ENCODE measurements at regions of chr3 and their contacts with region 1.

Region 1: GRCh38 chr3:156674046-156674910 is at the start of gene TIPARP:
- DNase-seq: peak; percentile 99 to 100 (median 99)
- H3K4me3 ChIP-seq: peak within 1 kb of the TSS; percentile 77
- H3K27ac ChIP-seq: peak within 1 kb of the TSS; percentile 88 to 90
- H3K4me1 ChIP-seq: peaks cover 4% of the 10 kb centered on the region
- H3K27me3 ChIP-seq: no peaks in the 10 kb centered on the region
- CTCF ChIP-seq: peak; percentile 61 to 86 (median 78)
- EP300 ChIP-seq: no peak
- POLR2A ChIP-seq: peak; percentile 97
- total RNA-seq, gene TIPARP: 26.3 to 109 (median 48.7) TPM

Region 2: GRCh38 chr3:154862265-154862664 is 1812.0 kb before region 1 on chr3:
- intact Hi-C with region 1: no loop called
- DNase-seq: no peak
- H3K4me3 ChIP-seq: no peak overlapping the region
- H3K27ac ChIP-seq: no peak overlapping the region
- H3K4me1 ChIP-seq: no peaks in the 10 kb centered on the region
- H3K27me3 ChIP-seq: no peaks in the 10 kb centered on the region
- CTCF ChIP-seq: no peak
- EP300 ChIP-seq: no peak
- POLR2A ChIP-seq: no peak

Region 3: GRCh38 chr3:156547637-156548036 is 126.6 kb before region 1 on chr3:
- intact Hi-C with region 1: loop called in 3 of 4 experiments (anchors 5 kb)
- DNase-seq: no peak
- H3K4me3 ChIP-seq: no peak overlapping the region
- H3K27ac ChIP-seq: no peak overlapping the region
- H3K4me1 ChIP-seq: peaks cover 9% of the 10 kb centered on the region
- H3K27me3 ChIP-seq: no peaks in the 10 kb centered on the region
- CTCF ChIP-seq: no peak
- EP300 ChIP-seq: no peak
- POLR2A ChIP-seq: no peak

Region 4: DNA sequence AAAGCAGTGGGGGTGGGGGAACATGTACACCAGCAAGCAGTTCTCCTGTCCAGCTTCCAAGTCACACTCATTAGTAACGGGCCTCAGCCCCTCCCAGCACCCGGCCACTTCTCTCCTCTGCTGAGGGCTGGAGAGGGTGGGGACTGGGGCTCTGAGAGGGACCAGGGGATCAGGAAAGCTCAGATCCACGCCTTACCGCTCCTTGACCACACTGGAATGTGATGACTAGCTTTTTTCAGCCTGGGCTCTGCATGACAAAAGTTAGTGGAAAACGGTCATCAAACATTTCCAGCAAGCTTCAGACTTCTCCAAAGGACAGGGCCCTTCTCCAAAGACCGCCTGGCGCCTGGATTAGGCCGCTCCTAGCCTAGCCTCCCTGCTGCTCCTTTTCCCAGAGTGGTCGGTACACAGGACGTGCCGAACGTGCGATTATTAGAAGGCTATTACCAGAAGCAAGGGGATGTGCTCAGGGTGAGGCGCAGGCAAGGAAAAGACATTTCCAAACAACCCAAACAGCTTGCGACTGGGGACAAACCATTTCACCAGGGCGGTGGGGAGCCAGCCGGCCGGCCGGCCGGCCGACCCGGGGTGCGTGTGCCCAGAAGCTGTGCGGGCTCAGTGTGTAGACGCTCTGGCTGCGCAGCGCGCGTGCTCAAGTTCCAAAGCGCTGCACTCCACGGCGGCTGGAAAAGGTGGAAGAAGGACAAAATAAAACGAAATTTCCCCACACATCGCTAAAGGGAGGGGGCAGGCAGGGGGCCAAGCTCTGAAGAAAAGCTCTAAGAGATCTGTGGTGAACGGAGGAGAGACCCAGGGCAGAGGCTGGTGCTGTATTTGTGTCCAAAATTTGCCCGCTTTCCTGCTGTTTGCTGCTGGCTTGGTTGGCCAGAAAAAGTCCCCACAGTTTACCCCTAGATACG is 68.3 kb before region 1 on chr3:
- intact Hi-C with region 1: loop called in 2 of 4 experiments (anchors 2 kb)
- DNase-seq: peak; percentile 29 to 76 (median 50)
- H3K4me3 ChIP-seq: peak overlapping the region; percentile 20
- H3K27ac ChIP-seq: peak overlapping the region; percentile 1 to 6
- H3K4me1 ChIP-seq: no peaks in the 10 kb centered on the region
- H3K27me3 ChIP-seq: no peaks in the 10 kb centered on the region
- CTCF ChIP-seq: no peak
- EP300 ChIP-seq: no peak
- POLR2A ChIP-seq: no peak

Region 5: GRCh38 chr3:156826144-156826895 is 152.0 kb after region 1 on chr3 and contains the start of gene LEKR1:
- intact Hi-C with region 1: loop called in 1 of 4 experiments (anchors 10 kb)
- DNase-seq: peak; percentile 84 to 93 (median 88)
- H3K4me3 ChIP-seq: peak within 1 kb of the TSS; percentile 67
- H3K27ac ChIP-seq: peak within 1 kb of the TSS; percentile 75 to 83
- H3K4me1 ChIP-seq: no peaks in the 10 kb centered on the region
- H3K27me3 ChIP-seq: no peaks in the 10 kb centered on the region
- CTCF ChIP-seq: peak in 2 of 3 donors; percentile 8 to 16
- EP300 ChIP-seq: peak; percentile 3
- POLR2A ChIP-seq: peak; percentile 76
- total RNA-seq, gene LEKR1: 1.5 to 7.8 (median 2.6) TPM

Region 6: DNA sequence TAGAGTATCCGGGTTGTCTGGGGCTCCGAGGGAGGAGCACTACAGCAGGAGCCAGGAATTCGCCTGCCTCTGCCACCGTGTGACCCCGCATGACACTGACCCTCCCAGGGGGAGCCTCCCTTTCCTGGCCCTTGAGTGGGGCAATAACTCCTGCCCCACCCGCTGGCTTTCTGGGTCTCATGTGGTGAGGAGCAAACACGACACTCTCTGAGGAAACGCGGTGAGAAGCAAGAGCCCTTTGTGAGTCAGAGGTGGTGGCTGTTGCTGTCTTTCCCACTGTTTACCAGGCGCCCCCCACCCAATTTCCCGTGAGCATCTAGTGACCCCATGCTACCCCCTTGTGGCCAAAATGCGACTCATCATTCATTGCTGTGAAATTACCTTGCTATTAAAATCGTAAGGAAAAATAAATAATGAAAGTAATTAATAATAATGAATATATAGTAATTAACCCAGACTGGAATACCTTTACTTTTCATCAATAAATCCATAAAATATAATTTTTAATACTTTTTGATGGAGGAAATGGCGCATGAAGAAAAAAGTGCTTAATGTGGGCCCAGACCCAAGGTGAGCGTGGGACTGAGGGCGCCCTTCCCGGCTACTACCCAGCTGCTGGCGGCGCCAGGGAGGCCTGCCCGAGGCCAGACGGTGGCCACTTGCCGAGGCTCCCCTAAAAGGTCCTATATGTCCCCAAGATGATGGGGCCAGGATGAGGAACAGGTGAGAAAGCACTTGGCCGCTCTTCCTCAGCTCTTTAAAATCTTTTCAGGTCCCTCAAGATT is 456.4 kb after region 1 on chr3:
- intact Hi-C with region 1: loop called in 3 of 4 experiments (anchors 5 kb)
- DNase-seq: peak; percentile 35 to 60 (median 54)
- H3K4me3 ChIP-seq: no peak overlapping the region
- H3K27ac ChIP-seq: peak overlapping the region; percentile 26 to 38
- H3K4me1 ChIP-seq: peaks cover 10% of the 10 kb centered on the region
- H3K27me3 ChIP-seq: no peaks in the 10 kb centered on the region
- CTCF ChIP-seq: peak in 2 of 3 donors; percentile 30 to 58
- EP300 ChIP-seq: no peak
- POLR2A ChIP-seq: no peak

Region 7: GRCh38 chr3:157148196-157148889 is 474.1 kb after region 1 on chr3:
- intact Hi-C with region 1: loop called in 1 of 4 experiments (anchors 10 kb)
- DNase-seq: no peak
- H3K4me3 ChIP-seq: no peak overlapping the region
- H3K27ac ChIP-seq: no peak overlapping the region
- H3K4me1 ChIP-seq: no peaks in the 10 kb centered on the region
- H3K27me3 ChIP-seq: no peaks in the 10 kb centered on the region
- CTCF ChIP-seq: no peak
- EP300 ChIP-seq: no peak
- POLR2A ChIP-seq: no peak

Measured in ovary (tissue), 10 donors.